PC-3 (cell line): ENCODE measurements at regions of chr5 and their contacts with region 1.

Region 1: DNA sequence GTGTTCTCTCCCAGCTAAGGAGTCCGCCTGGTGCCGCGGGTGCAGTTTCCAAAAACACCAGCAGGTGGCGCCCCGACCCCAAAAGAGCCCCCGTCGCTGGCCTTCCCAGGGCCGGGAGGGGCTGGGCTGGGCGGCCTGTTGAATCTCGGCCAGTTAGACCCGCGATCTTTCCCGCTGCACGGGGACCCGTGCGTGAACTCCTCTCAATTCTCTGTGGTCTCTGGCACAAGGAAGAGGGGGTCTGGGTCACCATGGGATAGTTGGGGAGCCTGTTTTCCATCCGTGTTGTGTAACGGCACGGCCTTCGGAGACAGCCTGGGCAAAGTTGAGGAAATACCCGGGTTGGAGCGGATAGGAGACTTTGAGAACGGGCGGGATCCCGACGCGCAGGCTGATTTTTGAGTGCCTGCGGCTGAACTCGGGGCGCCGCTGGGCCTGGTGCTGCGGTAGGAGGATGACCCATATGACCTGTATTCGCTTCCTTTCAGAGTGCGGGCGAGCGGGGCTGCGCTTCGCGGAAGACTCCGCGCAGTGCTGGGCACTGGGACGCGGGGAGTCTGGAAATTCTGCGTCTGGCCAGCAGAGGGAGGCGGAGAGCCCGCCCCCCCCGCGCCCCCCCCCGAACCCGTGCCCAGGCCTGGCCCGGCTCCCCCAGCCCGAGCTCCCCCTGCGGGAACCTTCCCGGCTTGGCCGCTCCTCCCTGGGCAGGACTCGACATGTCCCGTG is 7.9 kb upstream of the PSD2 start:
- DNase-seq: peak; percentile 85
- ATAC-seq: peak; percentile 92
- H3K4me3 ChIP-seq: peak overlapping the region; percentile 68
- H3K27ac ChIP-seq: no peak overlapping the region
- H3K4me1 ChIP-seq: no peaks in the 10 kb centered on the region
- H3K27me3 ChIP-seq: no peaks in the 10 kb centered on the region
- CTCF ChIP-seq: peak; percentile 87

Region 2: GRCh38 chr5:139631520-139632165 is 156.1 kb before region 1 on chr5:
- CTCF ChIA-PET with region 1: no interaction called
- POLR2A ChIA-PET with region 1: no interaction called
- intact Hi-C with region 1: no loop called
- DNase-seq: no peak
- ATAC-seq: no peak
- H3K4me3 ChIP-seq: no peak overlapping the region
- H3K27ac ChIP-seq: no peak overlapping the region
- H3K4me1 ChIP-seq: peaks cover 11% of the 10 kb centered on the region
- H3K27me3 ChIP-seq: no peaks in the 10 kb centered on the region
- CTCF ChIP-seq: no peak

Region 3: GRCh38 chr5:139765409-139766217 is 22.1 kb before region 1 on chr5:
- CTCF ChIA-PET with region 1: interaction called, 11 read pairs
- POLR2A ChIA-PET with region 1: no interaction called
- intact Hi-C with region 1: no loop called
- DNase-seq: peak; percentile 66
- ATAC-seq: peak; percentile 93
- H3K4me3 ChIP-seq: peak overlapping the region; percentile 76
- H3K27ac ChIP-seq: no peak overlapping the region
- H3K4me1 ChIP-seq: no peaks in the 10 kb centered on the region
- H3K27me3 ChIP-seq: no peaks in the 10 kb centered on the region
- CTCF ChIP-seq: peak; percentile 93

Region 4: DNA sequence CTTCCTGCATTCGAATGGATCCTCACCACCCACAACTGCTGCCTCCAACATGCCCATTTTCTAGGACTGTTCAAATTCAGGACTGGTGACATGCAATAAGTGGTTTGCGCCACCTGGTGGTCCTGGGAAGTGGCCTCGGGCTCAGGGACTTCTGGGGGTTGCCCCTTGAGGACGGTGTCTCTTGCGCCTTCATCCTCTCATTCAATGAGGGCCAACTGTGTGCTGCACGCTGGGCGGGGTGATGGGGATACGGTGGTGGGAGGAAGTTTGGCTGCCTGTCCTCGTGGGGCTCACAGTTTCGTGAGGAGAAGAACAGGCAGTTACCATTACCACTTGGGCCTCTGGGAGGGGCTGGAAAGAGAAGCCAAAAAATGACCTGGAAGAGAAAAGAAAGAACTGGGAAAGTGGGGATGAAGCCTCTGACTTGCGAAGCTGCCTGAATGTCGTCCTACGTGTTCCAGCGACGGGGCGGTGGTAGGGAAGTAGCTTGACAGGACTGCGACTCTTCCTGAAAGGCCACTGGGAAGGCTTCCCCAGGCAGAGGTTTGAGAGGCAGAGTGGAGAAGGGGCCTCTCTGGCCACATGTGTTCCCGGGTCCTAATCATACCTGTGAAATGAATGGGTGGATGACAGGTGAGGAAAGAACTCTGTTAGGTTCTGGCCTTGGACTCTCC is 56.9 kb after region 1 on chr5:
- CTCF ChIA-PET with region 1: interaction called, 4 read pairs
- POLR2A ChIA-PET with region 1: no interaction called
- intact Hi-C with region 1: loop called (anchors 1 kb)
- DNase-seq: peak; percentile 74
- ATAC-seq: peak; percentile 92
- H3K4me3 ChIP-seq: no peak overlapping the region
- H3K27ac ChIP-seq: no peak overlapping the region
- H3K4me1 ChIP-seq: no peaks in the 10 kb centered on the region
- H3K27me3 ChIP-seq: no peaks in the 10 kb centered on the region
- CTCF ChIP-seq: peak; percentile 90

Region 5: DNA sequence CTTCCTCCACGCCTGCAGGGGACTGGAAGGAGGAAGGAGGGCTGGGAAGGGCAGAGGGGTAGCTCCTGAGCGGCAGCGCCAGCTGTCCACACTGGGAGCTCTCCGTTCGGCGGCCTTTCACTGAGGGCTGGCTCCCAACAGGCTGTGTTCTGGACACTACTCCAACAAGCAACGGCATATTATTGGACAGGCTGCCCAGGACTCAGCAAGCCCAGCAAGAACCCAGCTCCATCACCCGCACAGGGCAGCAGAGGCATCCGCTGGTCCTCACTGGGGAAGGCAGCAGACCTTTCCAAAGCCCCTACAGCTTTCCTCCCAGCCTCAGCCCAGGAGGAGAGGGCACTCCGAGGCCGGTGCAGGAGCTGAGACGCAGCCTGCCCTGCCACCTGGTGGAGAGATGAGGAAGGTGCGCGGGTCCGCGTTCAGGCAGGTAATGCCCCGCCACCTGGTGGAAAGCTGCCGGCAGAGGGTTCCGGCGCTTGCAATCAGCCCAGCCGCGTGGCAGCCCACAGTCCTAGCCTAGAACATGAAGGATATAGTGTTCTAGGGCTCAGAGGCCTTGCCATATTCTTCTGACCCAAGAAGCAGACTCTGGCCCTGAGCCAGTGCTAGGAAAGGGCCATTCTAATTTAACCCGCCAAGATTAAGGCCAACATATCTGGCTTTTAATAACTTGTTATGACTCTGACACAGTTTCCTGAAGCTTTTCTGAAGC is 181.0 kb after region 1 on chr5:
- CTCF ChIA-PET with region 1: interaction called, 44 read pairs
- POLR2A ChIA-PET with region 1: no interaction called
- intact Hi-C with region 1: loop called (anchors 1 kb)
- DNase-seq: peak; percentile 87
- ATAC-seq: peak; percentile 98
- H3K4me3 ChIP-seq: no peak overlapping the region
- H3K27ac ChIP-seq: no peak overlapping the region
- H3K4me1 ChIP-seq: no peaks in the 10 kb centered on the region
- H3K27me3 ChIP-seq: no peaks in the 10 kb centered on the region
- CTCF ChIP-seq: peak; percentile 99

Region 6: GRCh38 chr5:140157032-140157803 is 369.5 kb after region 1 on chr5:
- CTCF ChIA-PET with region 1: interaction called, 4 read pairs
- POLR2A ChIA-PET with region 1: no interaction called
- intact Hi-C with region 1: loop called (anchors 1 kb)
- DNase-seq: peak; percentile 91
- ATAC-seq: peak; percentile 99
- H3K4me3 ChIP-seq: peak overlapping the region; percentile 59
- H3K27ac ChIP-seq: no peak overlapping the region
- H3K4me1 ChIP-seq: peaks cover 5% of the 10 kb centered on the region
- H3K27me3 ChIP-seq: no peaks in the 10 kb centered on the region
- CTCF ChIP-seq: peak; percentile 90